CD14-positive monocyte (primary cell): ENCODE measurements at regions of chr6 and their contacts with region 1.

Region 1: GRCh38 chr6:14089224-14089623 is 28.3 kb upstream of the CD83 start:
- DNase-seq: no peak
- H3K4me3 ChIP-seq: no peak overlapping the region
- H3K4me3 Mint-ChIP-seq: no peak overlapping the region
- H3K27ac ChIP-seq: no peak overlapping the region
- H3K27ac Mint-ChIP-seq: no peak overlapping the region
- H3K4me1 ChIP-seq: peaks cover 21 to 32% of the 10 kb centered on the region in 2 donors
- H3K4me1 Mint-ChIP-seq: peaks cover 39% of the 10 kb centered on the region
- H3K27me3 ChIP-seq: no peaks in the 10 kb centered on the region
- H3K27me3 Mint-ChIP-seq: peaks cover 0 to 14% (median 3%) of the 10 kb centered on the region in 3 donors
- CTCF ChIP-seq: no peak

Region 2: GRCh38 chr6:14130435-14131075 is 41.3 kb after region 1 on chr6:
- intact Hi-C with region 1: loop called in 1 of 2 experiments (anchors 10 kb)
- DNase-seq: peak in 1 of 3 donors; percentile 29
- H3K4me3 ChIP-seq: no peak overlapping the region
- H3K4me3 Mint-ChIP-seq: no peak overlapping the region
- H3K27ac ChIP-seq: no peak overlapping the region
- H3K27ac Mint-ChIP-seq: no peak overlapping the region
- H3K4me1 ChIP-seq: no peaks in the 10 kb centered on the region
- H3K4me1 Mint-ChIP-seq: peaks cover 18% of the 10 kb centered on the region
- H3K27me3 ChIP-seq: no peaks in the 10 kb centered on the region
- H3K27me3 Mint-ChIP-seq: peaks cover 0 to 7% (median 0%) of the 10 kb centered on the region in 3 donors
- CTCF ChIP-seq: no peak

Region 3: GRCh38 chr6:14216946-14217684 is 127.9 kb after region 1 on chr6:
- intact Hi-C with region 1: no loop called
- DNase-seq: no peak
- H3K4me3 ChIP-seq: no peak overlapping the region
- H3K4me3 Mint-ChIP-seq: no peak overlapping the region
- H3K27ac ChIP-seq: no peak overlapping the region
- H3K27ac Mint-ChIP-seq: no peak overlapping the region
- H3K4me1 ChIP-seq: peaks cover under 1 to 2% of the 10 kb centered on the region in 2 donors
- H3K4me1 Mint-ChIP-seq: peaks cover 5% of the 10 kb centered on the region
- H3K27me3 ChIP-seq: no peaks in the 10 kb centered on the region
- H3K27me3 Mint-ChIP-seq: peaks cover 0 to 5% (median 2%) of the 10 kb centered on the region in 3 donors
- CTCF ChIP-seq: no peak